CD4-positive, alpha-beta T cell (primary cell): ENCODE measurements at regions of chr10 and their contacts with region 1.

Region 1: DNA sequence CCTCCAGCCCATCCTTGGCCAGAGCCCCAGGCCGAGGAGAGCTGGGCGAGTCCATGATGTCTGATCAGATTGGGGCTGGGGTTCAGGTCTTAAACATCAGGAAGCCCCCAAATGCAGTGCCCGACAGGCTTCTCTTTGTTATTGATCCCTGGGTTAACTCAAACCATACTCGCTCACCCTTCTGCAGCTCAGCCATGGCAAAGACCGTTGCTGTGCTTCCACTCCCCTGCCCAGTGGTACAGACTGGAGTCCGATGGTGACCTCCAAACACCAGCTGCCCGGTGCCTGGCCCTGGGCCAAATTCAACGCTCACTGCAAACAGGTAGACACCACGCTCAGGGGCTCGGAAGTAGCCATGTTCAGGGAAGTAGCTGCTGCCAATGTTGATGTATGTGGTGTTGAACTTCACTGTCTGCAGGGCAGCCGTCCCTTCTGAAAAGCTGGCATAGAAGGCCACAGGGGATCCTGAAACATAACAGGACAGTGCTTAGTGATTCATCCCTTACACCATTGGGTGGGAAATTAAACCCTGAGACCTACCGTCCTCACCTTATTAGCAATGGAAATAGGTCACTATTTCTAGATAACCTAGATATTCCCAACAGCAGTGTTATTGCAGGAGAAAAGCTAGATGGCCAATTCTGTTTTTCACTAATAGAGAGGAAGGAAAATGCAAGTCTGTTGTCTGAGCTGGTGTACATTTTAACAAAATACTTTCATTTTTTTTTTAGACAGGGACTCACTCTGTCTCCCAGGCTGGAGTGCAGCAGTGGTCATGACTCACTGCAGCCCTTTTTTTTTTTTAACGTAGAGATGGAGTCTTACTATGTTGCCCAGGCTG is 20.5 kb downstream of the MMRN2 start:
- DNase-seq: no peak
- ATAC-seq: no peak
- H3K4me3 ChIP-seq: no peak overlapping the region
- H3K4me3 Mint-ChIP-seq: no peak overlapping the region
- H3K27ac ChIP-seq: no peak overlapping the region
- H3K27ac Mint-ChIP-seq: no peak overlapping the region
- H3K4me1 ChIP-seq: peaks cover 5% of the 10 kb centered on the region
- H3K4me1 Mint-ChIP-seq: no peaks in the 10 kb centered on the region
- H3K27me3 ChIP-seq: no peaks in the 10 kb centered on the region
- H3K27me3 Mint-ChIP-seq: no peaks in the 10 kb centered on the region
- CTCF ChIP-seq: no peak

Region 2: GRCh38 chr10:86965986-86966654 is 29.2 kb after region 1 on chr10:
- CTCF ChIA-PET with region 1: interaction called, 16 read pairs
- POLR2A ChIA-PET with region 1: interaction called, 6 read pairs
- intact Hi-C with region 1: loop called (anchors 1 kb)
- DNase-seq: peak in 1 of 14 experiments; percentile 24
- ATAC-seq: peak; percentile 9
- H3K4me3 ChIP-seq: peak overlapping the region; percentile 31
- H3K4me3 Mint-ChIP-seq: peak overlapping the region; percentile 69
- H3K27ac ChIP-seq: no peak overlapping the region
- H3K27ac Mint-ChIP-seq: peak overlapping the region; percentile 59
- H3K4me1 ChIP-seq: peaks cover 63% of the 10 kb centered on the region
- H3K4me1 Mint-ChIP-seq: peaks cover 34% of the 10 kb centered on the region
- H3K27me3 ChIP-seq: no peaks in the 10 kb centered on the region
- H3K27me3 Mint-ChIP-seq: no peaks in the 10 kb centered on the region
- CTCF ChIP-seq: no peak